ENCODE measurements at regions of chr10 and their contacts with region 1.

Region 1: DNA sequence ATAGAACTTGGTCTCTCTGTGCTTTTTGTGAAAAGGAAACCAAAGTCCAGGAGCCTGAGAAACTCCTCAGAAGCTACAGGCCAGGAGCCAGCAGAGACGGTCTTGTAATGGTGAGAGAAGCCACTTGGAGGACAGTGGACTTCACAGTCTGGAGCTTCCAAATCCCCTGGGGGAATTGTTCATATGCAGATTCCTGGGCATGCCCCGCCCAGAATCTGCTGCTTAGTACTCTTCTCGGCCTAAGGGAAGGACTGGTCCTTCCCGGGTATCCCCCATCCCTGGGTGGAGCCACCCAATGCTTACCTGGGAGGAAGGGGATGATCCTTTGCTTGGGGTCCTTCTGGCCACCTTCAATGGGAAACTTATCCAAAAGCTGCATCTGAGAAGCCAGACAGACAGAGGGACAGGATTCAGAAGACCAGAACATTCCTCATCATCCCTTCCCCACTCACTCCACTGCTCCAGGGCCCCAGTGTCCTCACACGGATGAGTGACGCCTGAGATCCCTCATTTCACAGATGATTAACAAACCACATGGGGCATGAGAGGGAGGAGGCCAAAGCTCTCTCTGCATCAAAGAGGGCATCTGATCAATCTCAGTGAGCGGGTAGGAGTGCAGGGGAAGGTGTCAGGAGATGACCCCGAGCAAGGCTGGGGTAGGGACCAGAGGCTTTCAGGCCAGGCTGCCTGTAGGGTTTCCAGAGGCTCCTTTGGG is 88.4 kb downstream of the SH3PXD2A start:
- DNase-seq: no peak
- H3K4me3 ChIP-seq: no peak overlapping the region
- H3K4me3 Mint-ChIP-seq: no peak overlapping the region
- H3K27ac Mint-ChIP-seq: no peak overlapping the region
- H3K4me1 ChIP-seq: no peaks in the 10 kb centered on the region
- H3K4me1 Mint-ChIP-seq: peaks cover 13% of the 10 kb centered on the region
- H3K27me3 ChIP-seq: no peaks in the 10 kb centered on the region
- H3K27me3 Mint-ChIP-seq: no peaks in the 10 kb centered on the region
- CTCF ChIP-seq: no peak

Region 2: GRCh38 chr10:103733045-103733419 is 33.9 kb before region 1 on chr10:
- CTCF ChIA-PET with region 1: no interaction called
- POLR2A ChIA-PET with region 1: no interaction called
- intact Hi-C with region 1: loop called (anchors 1 kb)
- DNase-seq: no peak
- H3K4me3 ChIP-seq: no peak overlapping the region
- H3K4me3 Mint-ChIP-seq: no peak overlapping the region
- H3K27ac Mint-ChIP-seq: no peak overlapping the region
- H3K4me1 ChIP-seq: peaks cover 9% of the 10 kb centered on the region
- H3K4me1 Mint-ChIP-seq: peaks cover 7% of the 10 kb centered on the region
- H3K27me3 ChIP-seq: no peaks in the 10 kb centered on the region
- H3K27me3 Mint-ChIP-seq: no peaks in the 10 kb centered on the region
- CTCF ChIP-seq: no peak

Region 3: DNA sequence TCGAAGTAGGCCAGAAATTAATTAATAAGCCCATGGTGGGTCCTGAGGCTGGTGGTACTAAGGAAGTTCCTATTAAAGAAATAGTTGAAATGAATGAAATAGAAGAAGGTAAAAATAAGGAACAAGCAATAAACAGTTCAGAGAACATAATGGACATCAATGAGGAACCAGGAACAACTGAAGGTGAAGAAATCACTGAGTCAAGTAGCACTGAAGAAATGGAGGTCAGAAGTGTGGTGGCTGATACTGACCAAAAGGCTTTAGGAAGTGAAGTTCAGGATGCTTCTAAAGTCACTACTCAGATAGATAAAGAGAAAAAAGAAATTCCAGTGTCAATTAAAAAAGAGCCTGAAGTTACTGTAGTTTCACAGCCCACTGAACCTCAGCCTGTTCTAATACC is 236.0 kb after region 1 on chr10:
- CTCF ChIA-PET with region 1: no interaction called
- POLR2A ChIA-PET with region 1: no interaction called
- intact Hi-C with region 1: no loop called
- DNase-seq: no peak
- H3K4me3 ChIP-seq: no peak overlapping the region
- H3K4me3 Mint-ChIP-seq: no peak overlapping the region
- H3K27ac Mint-ChIP-seq: no peak overlapping the region
- H3K4me1 ChIP-seq: no peaks in the 10 kb centered on the region
- H3K4me1 Mint-ChIP-seq: no peaks in the 10 kb centered on the region
- H3K27me3 ChIP-seq: no peaks in the 10 kb centered on the region
- H3K27me3 Mint-ChIP-seq: no peaks in the 10 kb centered on the region
- CTCF ChIP-seq: no peak